ENCODE measurements at regions of chr15 and their contacts with region 1.

Region 1: DNA sequence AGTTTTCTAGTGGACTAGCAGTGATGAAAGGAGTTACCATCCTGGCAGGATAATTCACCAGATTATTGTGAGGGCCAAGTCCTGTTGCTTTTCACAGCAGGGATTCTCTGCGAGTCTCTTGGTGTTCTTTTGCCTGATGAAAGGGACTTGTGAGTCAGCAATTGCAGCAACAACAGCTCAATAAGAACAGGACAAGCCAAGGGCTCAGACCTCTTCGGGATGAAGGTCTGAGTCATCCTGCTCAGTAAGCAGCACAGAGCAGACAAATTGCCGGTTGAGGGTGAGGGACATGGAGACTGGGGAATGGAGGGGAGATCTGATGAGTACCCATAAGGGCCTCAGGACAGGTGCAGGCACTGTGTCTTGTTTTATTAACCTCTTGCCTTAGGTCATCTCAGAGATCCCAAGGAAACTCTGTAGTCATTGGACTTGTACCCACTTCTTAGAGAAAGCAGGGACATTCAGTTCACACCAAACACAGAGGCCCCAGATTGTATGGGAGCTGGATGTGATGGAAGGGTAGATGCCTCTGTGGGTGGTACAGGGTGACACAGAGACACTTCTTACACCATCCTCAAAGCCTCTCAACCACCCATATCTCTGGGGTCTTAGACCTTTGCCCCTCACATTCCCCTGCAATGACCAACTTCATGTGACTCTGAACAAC is 173.8 kb upstream of the TLE3 start:
- DNase-seq: peak in 1 of 2 donors; percentile 98
- H3K4me3 ChIP-seq: peak overlapping the region in 1 of 2 donors; percentile 10
- H3K27ac ChIP-seq: peak overlapping the region; percentile 76
- H3K4me1 ChIP-seq: peaks cover 39% of the 10 kb centered on the region
- H3K27me3 ChIP-seq: no peaks in the 10 kb centered on the region
- CTCF ChIP-seq: no peak
- POLR2A ChIP-seq: no peak

Region 2: DNA sequence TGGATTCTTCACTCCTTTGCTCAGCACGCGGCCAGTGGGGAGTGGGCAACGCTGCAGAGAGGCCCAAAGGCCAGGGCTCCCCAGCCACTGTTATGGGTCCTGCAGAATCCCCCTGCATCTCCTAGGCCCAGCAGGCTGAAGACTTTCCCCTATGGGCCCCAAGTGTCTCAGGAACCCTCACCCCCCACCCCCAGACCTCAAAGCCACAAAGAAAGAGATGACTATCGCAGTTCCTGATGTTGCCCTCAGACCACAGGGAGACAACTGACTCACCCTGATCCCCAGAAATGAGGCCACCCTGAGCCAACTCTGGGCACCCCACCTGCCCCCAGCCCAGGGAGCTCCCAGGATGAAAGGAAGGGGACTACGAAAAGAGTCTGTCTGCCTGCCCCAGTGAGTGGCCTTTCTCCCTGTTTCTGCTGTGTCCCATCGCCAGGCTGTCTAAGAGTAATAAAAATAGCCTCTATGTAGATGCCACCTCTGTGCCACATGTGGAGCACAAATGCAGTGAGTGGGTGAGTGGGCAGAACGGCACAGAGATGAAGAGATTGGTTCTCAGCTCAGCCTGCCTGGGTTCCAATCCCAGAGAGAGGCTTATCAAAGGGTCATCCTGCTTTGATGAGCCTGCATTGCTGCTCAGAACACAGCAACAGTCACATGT is 208.8 kb after region 1 on chr15:
- intact Hi-C with region 1: loop called (anchors 5 kb)
- DNase-seq: no peak
- H3K4me3 ChIP-seq: no peak overlapping the region
- H3K27ac ChIP-seq: no peak overlapping the region
- H3K4me1 ChIP-seq: peaks cover 7% of the 10 kb centered on the region
- H3K27me3 ChIP-seq: no peaks in the 10 kb centered on the region
- CTCF ChIP-seq: no peak
- POLR2A ChIP-seq: no peak